Common myeloid progenitor, CD34-positive (primary cell): ENCODE measurements at regions of chr9 and their contacts with region 1.

Region 1: DNA sequence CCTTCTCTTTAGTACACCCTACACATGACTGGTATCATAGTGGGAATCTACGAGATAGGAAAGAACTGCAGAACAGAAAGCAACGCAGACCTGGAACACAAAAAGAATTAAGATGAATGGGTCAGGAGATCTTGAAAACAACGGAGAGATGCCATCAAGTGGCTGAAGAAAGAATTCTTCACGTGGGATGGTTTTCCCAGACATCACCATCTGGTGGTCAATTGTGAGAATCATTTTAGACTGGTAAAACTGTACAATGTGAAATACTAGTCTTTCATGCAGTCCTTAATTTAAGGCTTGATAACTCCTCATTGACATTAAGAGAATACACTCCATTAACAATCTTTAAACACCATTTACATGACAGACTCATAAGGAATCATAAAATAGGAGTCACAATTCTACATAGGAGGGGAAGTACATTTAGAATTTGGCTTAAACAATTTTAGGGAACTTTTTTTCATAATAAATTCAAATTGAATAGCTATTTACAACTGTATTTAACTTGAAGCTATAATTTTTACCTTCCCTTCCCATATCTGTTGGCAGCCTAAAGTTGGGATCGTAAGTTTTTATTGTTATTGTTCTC is 128.4 kb upstream of the TRPM3 start:
- DNase-seq: peak; percentile 72 to 83 (median 80)
- H3K4me3 ChIP-seq: peak overlapping the region in 2 of 7 experiments; percentile 9 to 58
- H3K27ac ChIP-seq: no peak overlapping the region
- H3K4me1 ChIP-seq: peaks cover 0 to 7% (median 2%) of the 10 kb centered on the region in 4 experiments
- H3K27me3 ChIP-seq: peaks cover 0 to 5% (median 0%) of the 10 kb centered on the region in 5 experiments

Region 2: DNA sequence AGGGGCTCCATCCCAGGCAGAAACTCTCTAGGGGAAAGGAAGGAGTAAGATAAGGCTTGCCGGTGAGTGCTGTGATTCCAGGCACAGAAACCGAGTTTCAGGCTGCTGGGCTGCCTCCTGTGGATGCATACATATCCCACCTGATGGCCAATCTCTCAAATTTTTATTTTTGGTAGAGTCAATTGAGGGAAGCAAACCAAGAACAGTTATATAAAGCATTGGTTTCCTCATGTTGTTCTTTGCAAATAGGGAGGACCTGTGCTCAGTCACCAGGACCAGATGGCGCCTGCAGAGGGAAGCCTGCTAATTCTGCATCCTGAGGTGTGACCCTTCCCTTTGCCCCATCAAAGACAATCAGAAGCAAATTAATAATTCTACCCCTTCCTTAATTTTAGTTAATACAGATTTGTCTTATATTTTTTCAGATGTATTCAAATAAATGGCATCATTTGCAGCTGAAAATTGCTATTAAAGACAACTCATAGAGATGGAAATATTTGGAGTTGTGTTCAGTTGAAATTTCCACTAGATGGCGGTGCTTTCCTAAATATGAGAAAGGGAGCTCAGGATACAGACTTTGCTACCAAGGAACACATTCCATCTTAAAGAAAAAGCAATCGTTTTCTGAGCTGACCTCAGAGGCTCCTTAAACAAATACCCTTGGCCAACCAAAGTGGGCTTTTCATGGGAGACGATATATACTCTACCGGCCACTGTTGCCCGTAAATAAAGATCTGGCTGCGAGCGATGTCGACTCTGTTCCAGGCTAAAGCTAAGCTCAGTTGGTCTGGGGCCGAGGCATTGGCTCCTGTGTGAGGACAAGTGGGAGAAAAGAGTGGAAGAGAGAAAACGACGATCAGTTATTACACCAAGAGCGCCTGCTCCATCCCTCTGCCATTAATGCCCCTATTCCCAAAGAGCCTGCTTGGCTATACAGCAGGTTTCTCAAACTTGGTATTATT is 609.7 kb before region 1 on chr9:
- CTCF ChIA-PET with region 1: interaction called, 21 read pairs
- POLR2A ChIA-PET with region 1: no interaction called
- DNase-seq: peak; percentile 47 to 70 (median 60)
- H3K4me3 ChIP-seq: no peak overlapping the region
- H3K27ac ChIP-seq: no peak overlapping the region
- H3K4me1 ChIP-seq: no peaks in the 10 kb centered on the region
- H3K27me3 ChIP-seq: no peaks in the 10 kb centered on the region

Region 3: GRCh38 chr9:70924895-70925547 is 324.8 kb before region 1 on chr9:
- CTCF ChIA-PET with region 1: interaction called, 85 read pairs
- POLR2A ChIA-PET with region 1: no interaction called
- DNase-seq: peak; percentile 67 to 79 (median 79)
- H3K4me3 ChIP-seq: peak overlapping the region in 1 of 7 experiments; percentile 19
- H3K27ac ChIP-seq: no peak overlapping the region
- H3K4me1 ChIP-seq: peaks cover 0 to 15% (median 3%) of the 10 kb centered on the region in 4 experiments
- H3K27me3 ChIP-seq: no peaks in the 10 kb centered on the region

Region 4: DNA sequence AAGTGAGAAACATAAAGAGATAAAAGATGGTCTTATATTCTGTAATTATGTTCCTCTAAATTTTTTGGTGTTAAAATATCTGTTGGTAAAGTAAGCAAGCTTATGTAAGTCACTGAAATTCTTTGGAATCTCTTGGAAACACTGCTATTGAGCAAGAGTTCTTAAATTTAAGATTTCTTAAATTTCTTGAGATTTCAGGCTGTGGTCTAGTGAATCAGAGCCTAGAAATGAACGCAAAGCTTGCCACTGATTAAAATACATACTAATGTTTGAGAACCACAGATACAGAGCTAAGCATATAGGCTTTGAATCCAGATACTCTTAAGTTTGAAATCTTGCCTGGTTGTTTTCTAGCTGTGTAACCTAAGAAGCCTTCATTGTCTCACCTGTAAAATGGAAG is 261.8 kb before region 1 on chr9:
- CTCF ChIA-PET with region 1: no interaction called
- POLR2A ChIA-PET with region 1: no interaction called
- DNase-seq: no peak
- H3K4me3 ChIP-seq: no peak overlapping the region
- H3K27ac ChIP-seq: no peak overlapping the region
- H3K4me1 ChIP-seq: no peaks in the 10 kb centered on the region
- H3K27me3 ChIP-seq: no peaks in the 10 kb centered on the region

Region 5: GRCh38 chr9:71302776-71303175 is 53.0 kb after region 1 on chr9:
- CTCF ChIA-PET with region 1: no interaction called
- POLR2A ChIA-PET with region 1: no interaction called
- DNase-seq: no peak
- H3K4me3 ChIP-seq: no peak overlapping the region
- H3K27ac ChIP-seq: no peak overlapping the region
- H3K4me1 ChIP-seq: no peaks in the 10 kb centered on the region
- H3K27me3 ChIP-seq: no peaks in the 10 kb centered on the region